ENCODE measurements at regions of chr9 and their contacts with region 1.

Region 1: DNA sequence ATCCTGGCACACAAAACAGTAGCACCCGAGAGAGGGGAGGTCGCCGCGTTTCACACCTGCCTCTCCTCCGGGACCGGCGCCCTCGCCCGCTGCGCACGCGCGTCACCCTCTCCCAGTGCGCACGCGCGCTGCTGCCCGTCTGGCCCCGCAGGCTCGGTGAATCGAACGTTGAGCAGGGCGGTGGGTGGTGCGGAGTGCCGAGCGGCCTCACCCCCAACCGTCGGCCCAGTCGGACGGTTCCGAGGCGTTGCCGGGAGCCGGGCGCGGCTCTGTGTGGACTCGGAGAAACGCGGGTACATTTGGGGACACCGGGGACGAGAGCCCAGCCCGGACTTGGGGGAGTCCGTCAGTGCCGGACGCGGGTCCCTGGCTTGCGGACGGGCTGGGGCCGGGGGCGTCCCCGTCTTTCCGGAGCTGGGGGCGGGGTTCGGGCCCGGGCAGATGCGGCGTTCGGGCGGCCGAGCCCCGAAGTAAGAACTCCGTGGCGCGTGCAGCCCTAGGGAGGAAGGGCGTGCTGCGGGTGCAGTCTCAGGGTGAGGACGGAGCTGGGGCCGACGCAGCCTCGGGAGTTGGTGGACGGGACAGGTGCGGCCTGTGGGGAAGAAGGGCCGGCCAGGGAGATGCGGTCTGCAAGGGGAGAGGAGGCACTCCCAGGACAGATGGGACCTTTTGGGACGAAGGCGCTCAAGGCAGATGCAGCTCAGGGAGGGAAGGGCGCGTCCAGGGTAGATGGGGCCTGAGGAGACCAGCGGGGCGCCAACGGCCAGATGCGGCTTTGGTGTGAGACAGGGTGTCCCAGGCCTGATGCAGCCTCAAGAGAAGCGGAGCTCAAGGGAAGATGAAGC is at the start of gene POMT1:
- H3K4me3 Mint-ChIP-seq: peak within 1 kb of the TSS; percentile 89
- H3K27ac Mint-ChIP-seq: peak within 1 kb of the TSS; percentile 86
- H3K4me1 Mint-ChIP-seq: peaks cover 27% of the 10 kb centered on the region
- H3K27me3 Mint-ChIP-seq: peaks cover 19% of the 10 kb centered on the region

Region 2: GRCh38 chr9:131349881-131350563 is 153.0 kb before region 1 on chr9:
- intact Hi-C with region 1: no loop called
- H3K4me3 Mint-ChIP-seq: peak overlapping the region; percentile 72
- H3K27ac Mint-ChIP-seq: peak overlapping the region; percentile 78
- H3K4me1 Mint-ChIP-seq: peaks cover 22% of the 10 kb centered on the region
- H3K27me3 Mint-ChIP-seq: peaks cover 6% of the 10 kb centered on the region

Region 3: DNA sequence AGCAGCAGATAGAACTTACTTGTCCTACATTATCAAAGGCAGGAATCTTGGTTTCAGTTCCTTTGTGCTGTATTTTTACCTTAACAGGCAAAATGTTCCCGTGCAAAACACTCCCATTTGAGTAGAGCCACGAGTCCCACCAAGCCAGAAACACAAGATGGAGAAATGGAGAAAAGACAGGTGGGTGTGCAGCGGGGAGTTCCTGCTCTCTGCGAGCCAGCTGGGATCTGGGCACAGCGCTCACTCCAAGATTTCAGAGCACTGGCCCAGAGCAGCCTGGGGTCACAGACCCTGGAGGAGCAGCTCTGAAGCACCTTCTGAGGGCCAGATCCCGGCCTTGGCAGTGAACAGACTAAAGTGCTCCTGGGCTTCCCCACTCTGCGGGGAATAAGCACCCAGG is 25.2 kb after region 1 on chr9:
- intact Hi-C with region 1: loop called (anchors 1 kb)
- H3K4me3 Mint-ChIP-seq: no peak overlapping the region
- H3K27ac Mint-ChIP-seq: peak overlapping the region; percentile 19
- H3K4me1 Mint-ChIP-seq: peaks cover 22% of the 10 kb centered on the region
- H3K27me3 Mint-ChIP-seq: no peaks in the 10 kb centered on the region

Region 4: DNA sequence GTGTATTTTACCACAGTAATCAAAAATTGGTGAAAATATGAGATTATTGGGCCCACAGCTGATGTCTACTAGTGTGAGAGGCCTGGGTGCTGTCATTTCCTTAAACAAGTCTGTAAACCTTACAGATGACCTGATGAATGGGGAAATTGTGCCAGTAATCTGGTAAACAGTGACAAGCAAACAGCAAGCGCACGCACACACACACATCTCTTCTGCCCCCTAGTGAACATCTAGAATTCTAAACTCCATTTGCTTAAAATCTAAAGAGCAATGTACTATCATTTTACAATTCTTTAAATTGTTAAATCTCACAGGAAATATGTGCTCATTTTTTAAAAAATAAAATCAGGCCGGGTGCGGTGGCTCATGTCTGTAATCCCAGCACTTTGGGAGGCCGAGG is 244.4 kb after region 1 on chr9:
- intact Hi-C with region 1: loop called (anchors 5 kb)
- H3K4me3 Mint-ChIP-seq: no peak overlapping the region
- H3K27ac Mint-ChIP-seq: peak overlapping the region; percentile 41
- H3K4me1 Mint-ChIP-seq: peaks cover 35% of the 10 kb centered on the region
- H3K27me3 Mint-ChIP-seq: peaks cover 4% of the 10 kb centered on the region

Measured in dendritic cell treated with granulocyte-macrophage colony-stimulating factor and Interleukin-4, amounts not matched to agents 40 ng/mL and 50 ng/mL, for 4 days (primary cell).